Mucosa of descending colon (tissue), 3 donors: ENCODE measurements at regions of chr16 and their contacts with region 1.

Region 1: DNA sequence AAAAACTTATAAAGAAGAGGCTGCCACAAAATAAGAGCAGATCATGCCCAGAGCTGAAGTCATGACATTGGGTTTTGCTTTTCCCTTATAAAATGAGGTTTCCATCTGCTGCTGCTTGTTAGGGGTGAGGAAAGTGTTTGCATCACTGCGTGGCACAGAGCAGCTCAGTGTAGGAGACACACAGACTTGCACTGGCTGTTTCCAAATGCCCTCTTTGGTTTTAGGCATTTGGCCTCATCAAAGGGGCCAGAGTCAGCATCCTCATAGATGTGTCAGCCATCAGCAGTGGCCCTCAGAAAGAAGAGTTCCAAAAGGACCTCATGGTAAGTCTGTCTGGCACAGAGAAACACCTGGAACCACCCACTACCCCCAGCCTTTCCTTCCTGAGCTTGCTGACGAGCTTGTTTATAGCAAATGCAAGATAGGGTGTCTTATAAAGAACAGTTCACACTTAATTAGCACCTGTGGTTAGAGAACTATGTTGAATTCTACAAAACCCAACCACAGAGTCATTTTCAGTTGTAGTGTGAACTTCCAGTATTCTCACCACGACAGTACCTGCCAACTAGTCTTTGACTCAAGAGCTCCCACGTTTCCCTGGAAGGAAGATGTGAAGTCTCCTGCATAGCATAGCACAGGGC is 17.0 kb downstream of the VWA3A start:
- DNase-seq: no peak
- ATAC-seq: no peak
- H3K4me3 ChIP-seq: no peak overlapping the region
- H3K4me1 ChIP-seq: no peaks in the 10 kb centered on the region
- CTCF ChIP-seq: no peak

Region 2: DNA sequence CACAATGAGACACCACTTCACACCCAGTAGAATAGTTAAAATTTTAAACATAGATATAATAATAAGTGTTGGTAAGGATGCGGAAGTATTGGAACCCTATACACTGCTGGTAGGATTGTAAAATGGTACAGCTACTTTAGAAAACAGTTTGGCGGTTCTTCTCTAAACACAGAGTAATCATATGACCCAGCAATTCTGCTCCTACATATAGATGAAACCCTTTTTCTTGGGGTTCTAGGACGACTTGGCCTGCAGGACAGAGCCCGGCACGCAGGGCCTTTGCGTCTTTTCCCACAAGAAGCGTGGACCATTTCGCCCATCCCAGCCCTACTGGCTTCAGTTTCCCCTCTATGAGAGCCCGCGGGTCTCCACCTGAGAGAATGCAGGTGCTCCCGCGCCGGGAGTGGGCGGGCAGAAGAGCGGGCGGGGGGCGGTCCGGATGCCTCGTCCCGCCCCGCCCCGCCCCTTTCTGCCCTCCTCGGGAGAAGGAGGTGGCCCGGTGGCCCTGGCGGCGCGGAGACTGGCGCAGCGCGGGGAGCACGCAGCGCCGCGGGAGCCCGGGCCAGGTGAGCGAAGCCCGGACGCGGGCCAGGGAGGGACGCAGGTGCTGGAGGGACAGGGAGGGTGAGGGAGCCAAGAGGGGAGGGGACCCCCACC is 52.7 kb after region 1 on chr16 and contains the start of gene SDR42E2:
- intact Hi-C with region 1: loop called in 1 of 2 experiments (anchors 10 kb)
- DNase-seq: peak in 2 of 3 donors; percentile 51 to 65
- ATAC-seq: peak; percentile 84
- H3K4me3 ChIP-seq: no peak within 1 kb of the TSS
- H3K4me1 ChIP-seq: peaks cover 8% of the 10 kb centered on the region
- CTCF ChIP-seq: no peak
- total RNA-seq, gene SDR42E2: not detected

Region 3: GRCh38 chr16:22190081-22190775 is 80.8 kb after region 1 on chr16:
- intact Hi-C with region 1: no loop called
- DNase-seq: peak; percentile 89 to 97 (median 92)
- ATAC-seq: peak; percentile 73
- H3K4me3 ChIP-seq: peak overlapping the region; percentile 22
- H3K4me1 ChIP-seq: peaks cover 30% of the 10 kb centered on the region
- CTCF ChIP-seq: peak; percentile 5